Activated CD4-positive, alpha-beta T cell treated with anti-CD3 and anti-CD28 coated beads, Interleukin-2, amount 10 ng/mL, durations not matched to agents 24 days and 14 days (primary cell): ENCODE measurements at regions of chr14 and their contacts with region 1.

Region 1: DNA sequence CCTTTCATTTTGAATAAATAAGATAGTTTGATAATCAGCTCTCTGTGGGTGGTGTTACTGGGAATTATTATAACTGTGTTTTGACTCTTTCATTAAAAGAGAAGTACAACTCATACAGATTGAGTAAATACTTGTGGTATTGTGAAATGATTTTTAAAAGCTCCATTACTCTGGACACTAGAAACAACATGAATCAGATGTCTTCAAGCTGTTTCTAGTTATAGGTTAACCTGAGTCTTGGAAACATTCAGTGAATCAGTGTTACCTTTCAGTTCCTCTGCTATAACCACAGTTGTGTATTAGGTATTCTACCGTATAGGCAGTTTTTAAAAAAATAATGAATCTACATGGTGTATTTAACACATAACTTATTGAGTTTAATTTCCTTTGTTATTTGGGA is 128.4 kb upstream of the SSTR1 start:
- DNase-seq: no peak
- H3K4me3 Mint-ChIP-seq: peak overlapping the region; percentile 29
- H3K27ac Mint-ChIP-seq: no peak overlapping the region
- H3K4me1 Mint-ChIP-seq: peaks cover 23% of the 10 kb centered on the region
- H3K27me3 Mint-ChIP-seq: no peaks in the 10 kb centered on the region

Region 2: GRCh38 chr14:37658156-37658555 is 421.1 kb before region 1 on chr14:
- intact Hi-C with region 1: no loop called
- DNase-seq: no peak
- H3K4me3 Mint-ChIP-seq: no peak overlapping the region
- H3K27ac Mint-ChIP-seq: no peak overlapping the region
- H3K4me1 Mint-ChIP-seq: no peaks in the 10 kb centered on the region
- H3K27me3 Mint-ChIP-seq: no peaks in the 10 kb centered on the region

Region 3: DNA sequence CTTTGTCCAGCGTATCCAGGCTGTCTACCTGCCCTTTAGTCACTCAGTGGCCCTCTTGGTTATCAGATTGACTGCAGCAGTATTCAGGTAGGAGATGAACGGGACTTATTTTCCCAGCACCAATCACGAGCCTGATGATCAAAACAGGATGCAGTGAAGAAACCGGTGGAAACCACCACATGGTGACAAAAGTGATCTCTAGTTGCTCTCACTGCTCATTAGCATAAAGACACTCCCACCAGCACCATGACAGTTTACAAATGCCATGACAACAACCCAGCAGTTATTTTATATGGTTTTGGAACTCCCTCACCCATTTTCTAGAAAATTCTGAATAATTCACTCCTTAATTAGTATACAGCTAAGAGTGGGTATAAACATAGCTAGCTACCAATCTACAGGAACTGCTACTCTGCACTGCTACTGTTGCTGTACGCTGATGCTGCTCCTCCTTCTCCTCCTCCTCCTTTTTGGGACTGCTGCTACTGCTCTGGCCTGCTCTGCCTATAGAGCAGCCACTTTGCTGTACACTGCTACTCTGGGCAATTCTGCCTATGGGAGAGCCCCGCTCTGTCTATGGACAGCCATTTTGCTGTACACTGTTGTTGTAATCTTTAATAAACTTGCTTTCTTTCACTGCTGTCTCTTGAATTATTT is 14.0 kb before region 1 on chr14:
- intact Hi-C with region 1: loop called (anchors 1 kb)
- DNase-seq: peak; percentile 89
- H3K4me3 Mint-ChIP-seq: peak overlapping the region; percentile 72
- H3K27ac Mint-ChIP-seq: peak overlapping the region; percentile 60
- H3K4me1 Mint-ChIP-seq: peaks cover 13% of the 10 kb centered on the region
- H3K27me3 Mint-ChIP-seq: no peaks in the 10 kb centered on the region

Region 4: GRCh38 chr14:38210587-38211216 is 131.4 kb after region 1 on chr14:
- intact Hi-C with region 1: no loop called
- DNase-seq: no peak
- H3K4me3 Mint-ChIP-seq: no peak overlapping the region
- H3K27ac Mint-ChIP-seq: no peak overlapping the region
- H3K4me1 Mint-ChIP-seq: peaks cover 3% of the 10 kb centered on the region
- H3K27me3 Mint-ChIP-seq: peaks cover 67% of the 10 kb centered on the region

Region 5: GRCh38 chr14:38342803-38343202 is 263.5 kb after region 1 on chr14:
- intact Hi-C with region 1: no loop called
- DNase-seq: no peak
- H3K4me3 Mint-ChIP-seq: no peak overlapping the region
- H3K27ac Mint-ChIP-seq: no peak overlapping the region
- H3K4me1 Mint-ChIP-seq: no peaks in the 10 kb centered on the region
- H3K27me3 Mint-ChIP-seq: no peaks in the 10 kb centered on the region